ENCODE measurements at regions of chr6 and their contacts with region 1.

Region 1: GRCh38 chr6:34810936-34811632 is 19.2 kb downstream of the BLTP3A start:
- DNase-seq: peak; percentile 15
- ATAC-seq: peak; percentile 85
- H3K4me3 ChIP-seq: no peak overlapping the region
- H3K27ac ChIP-seq: peak overlapping the region; percentile 50; the same call in 1 of the 2 replicates
- H3K4me1 ChIP-seq: peaks cover 16 to 46% of the 10 kb centered on the region in 2 experiments
- H3K27me3 ChIP-seq: no peaks in the 10 kb centered on the region
- CTCF ChIP-seq: no peak
- POLR2A ChIP-seq: no peak
- RAD21 ChIP-seq: no peak

Region 2: GRCh38 chr6:34132486-34133185 is 678.4 kb before region 1 on chr6:
- CTCF ChIA-PET with region 1: no interaction called
- POLR2A ChIA-PET with region 1: no interaction called
- RAD21 ChIA-PET with region 1: no interaction called
- intact Hi-C with region 1: no loop called
- DNase-seq: no peak
- ATAC-seq: no peak
- H3K4me3 ChIP-seq: no peak overlapping the region
- H3K27ac ChIP-seq: no peak overlapping the region
- H3K4me1 ChIP-seq: peaks cover 2 to 14% of the 10 kb centered on the region in 2 experiments; a peak in 2 of 4 replicates
- H3K27me3 ChIP-seq: 0 out of 2 replicates have a peak, but pooled peaks cover 4% of the 10 kb centered on the region
- CTCF ChIP-seq: no peak
- POLR2A ChIP-seq: no peak
- RAD21 ChIP-seq: no peak

Region 3: DNA sequence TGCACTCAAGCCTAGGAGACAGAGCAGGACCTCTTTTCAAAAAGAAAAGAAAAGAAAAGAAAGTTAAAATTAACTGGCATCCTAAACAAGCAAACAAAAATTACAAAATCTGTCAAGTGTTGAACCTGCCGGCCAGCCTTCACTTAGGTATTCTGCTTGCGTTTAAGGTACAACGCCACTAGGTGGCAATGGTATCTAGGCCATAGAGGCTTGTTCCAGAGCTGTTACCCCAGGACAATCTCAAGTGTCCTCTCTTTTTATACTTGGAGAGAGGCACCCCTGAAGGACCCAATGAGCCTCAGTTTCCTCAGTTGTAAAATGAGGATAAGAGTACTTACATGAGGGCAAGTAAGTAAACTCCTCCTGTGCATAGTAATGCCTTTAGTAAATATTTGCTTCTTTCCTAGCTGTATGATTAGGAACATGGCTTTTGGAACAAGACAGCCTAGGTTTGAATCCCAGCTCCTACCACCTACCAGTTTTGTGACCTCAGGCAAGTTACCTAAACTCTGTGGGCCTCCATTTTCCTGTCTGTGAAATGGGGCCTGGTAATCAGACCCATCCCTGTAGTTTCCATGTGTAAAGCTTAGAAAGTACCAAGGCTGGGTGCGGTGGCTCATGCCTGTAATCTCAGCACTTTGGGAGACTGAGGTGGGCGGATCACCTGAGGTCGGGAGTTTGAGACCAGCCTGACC is 351.0 kb before region 1 on chr6:
- CTCF ChIA-PET with region 1: no interaction called
- POLR2A ChIA-PET with region 1: no interaction called
- RAD21 ChIA-PET with region 1: no interaction called
- intact Hi-C with region 1: loop called (anchors 5 kb)
- DNase-seq: peak; percentile 70
- ATAC-seq: peak; percentile 56
- H3K4me3 ChIP-seq: no peak overlapping the region
- H3K27ac ChIP-seq: no peak overlapping the region
- H3K4me1 ChIP-seq: peaks cover 8 to 35% of the 10 kb centered on the region in 2 experiments
- H3K27me3 ChIP-seq: no peaks in the 10 kb centered on the region
- CTCF ChIP-seq: peak; percentile 68 to 85 (median 85)
- POLR2A ChIP-seq: no peak
- RAD21 ChIP-seq: peak; percentile 97

Region 4: GRCh38 chr6:35139908-35140655 is 329.0 kb after region 1 on chr6:
- CTCF ChIA-PET with region 1: no interaction called
- POLR2A ChIA-PET with region 1: no interaction called
- RAD21 ChIA-PET with region 1: no interaction called
- intact Hi-C with region 1: no loop called
- DNase-seq: peak; percentile 50
- ATAC-seq: peak; percentile 79
- H3K4me3 ChIP-seq: no peak overlapping the region
- H3K27ac ChIP-seq: no peak overlapping the region
- H3K4me1 ChIP-seq: no peaks in the 10 kb centered on the region
- H3K27me3 ChIP-seq: no peaks in the 10 kb centered on the region
- CTCF ChIP-seq: peak; percentile 78 to 91 (median 82)
- POLR2A ChIP-seq: no peak
- RAD21 ChIP-seq: peak; percentile 95